ENCODE measurements at regions of chr5 and their contacts with region 1.

Region 1: DNA sequence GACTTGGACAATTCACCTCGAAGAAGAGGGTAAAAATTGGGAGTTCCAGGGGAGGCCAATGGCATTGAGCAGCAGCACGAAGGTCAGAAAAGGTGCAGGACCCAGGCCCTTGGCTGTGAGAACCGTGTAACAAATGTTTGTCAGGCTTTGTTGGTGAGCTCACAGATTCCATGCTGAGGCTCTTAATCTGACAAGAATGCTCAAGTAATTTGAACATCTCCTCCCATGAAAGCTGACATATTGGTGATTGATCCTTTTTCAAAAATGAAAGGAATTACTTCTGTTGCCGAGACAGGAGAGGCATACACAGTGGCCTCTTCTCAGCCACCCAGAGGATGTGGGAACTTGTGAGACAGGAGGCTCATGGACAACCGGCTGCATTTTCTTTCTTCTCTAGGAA is 11.6 kb downstream of the RAI14 start:
- DNase-seq: no peak
- H3K4me3 ChIP-seq: no peak overlapping the region
- H3K27ac ChIP-seq: no peak overlapping the region
- H3K4me1 ChIP-seq: peaks cover 4 to 16% (median 15%) of the 10 kb centered on the region in 4 experiments
- H3K27me3 ChIP-seq: no peaks in the 10 kb centered on the region
- CTCF ChIP-seq: no peak
- EP300 ChIP-seq: no peak
- POLR2A ChIP-seq: no peak
- RAD21 ChIP-seq: no peak

Region 2: GRCh38 chr5:34545164-34546025 is 122.3 kb before region 1 on chr5:
- CTCF ChIA-PET with region 1: no interaction called
- POLR2A ChIA-PET with region 1: no interaction called
- DNase-seq: no peak
- H3K4me3 ChIP-seq: peak overlapping the region in 1 of 4 experiments; percentile 1; a peak in 1 of 8 replicates
- H3K27ac ChIP-seq: no peak overlapping the region
- H3K4me1 ChIP-seq: peaks cover 9 to 47% (median 17%) of the 10 kb centered on the region in 4 experiments; a peak in 6 of 7 replicates
- H3K27me3 ChIP-seq: no peaks in the 10 kb centered on the region
- CTCF ChIP-seq: no peak
- EP300 ChIP-seq: no peak
- POLR2A ChIP-seq: no peak
- RAD21 ChIP-seq: no peak

Region 3: GRCh38 chr5:34555699-34556508 is 111.8 kb before region 1 on chr5:
- CTCF ChIA-PET with region 1: no interaction called
- POLR2A ChIA-PET with region 1: no interaction called
- DNase-seq: no peak
- H3K4me3 ChIP-seq: no peak overlapping the region
- H3K27ac ChIP-seq: no peak overlapping the region
- H3K4me1 ChIP-seq: no peaks in the 10 kb centered on the region
- H3K27me3 ChIP-seq: peaks cover 0 to 5% (median 0%) of the 10 kb centered on the region in 4 experiments; a peak in 1 of 7 replicates
- CTCF ChIP-seq: no peak
- EP300 ChIP-seq: no peak
- POLR2A ChIP-seq: no peak
- RAD21 ChIP-seq: no peak

Region 4: DNA sequence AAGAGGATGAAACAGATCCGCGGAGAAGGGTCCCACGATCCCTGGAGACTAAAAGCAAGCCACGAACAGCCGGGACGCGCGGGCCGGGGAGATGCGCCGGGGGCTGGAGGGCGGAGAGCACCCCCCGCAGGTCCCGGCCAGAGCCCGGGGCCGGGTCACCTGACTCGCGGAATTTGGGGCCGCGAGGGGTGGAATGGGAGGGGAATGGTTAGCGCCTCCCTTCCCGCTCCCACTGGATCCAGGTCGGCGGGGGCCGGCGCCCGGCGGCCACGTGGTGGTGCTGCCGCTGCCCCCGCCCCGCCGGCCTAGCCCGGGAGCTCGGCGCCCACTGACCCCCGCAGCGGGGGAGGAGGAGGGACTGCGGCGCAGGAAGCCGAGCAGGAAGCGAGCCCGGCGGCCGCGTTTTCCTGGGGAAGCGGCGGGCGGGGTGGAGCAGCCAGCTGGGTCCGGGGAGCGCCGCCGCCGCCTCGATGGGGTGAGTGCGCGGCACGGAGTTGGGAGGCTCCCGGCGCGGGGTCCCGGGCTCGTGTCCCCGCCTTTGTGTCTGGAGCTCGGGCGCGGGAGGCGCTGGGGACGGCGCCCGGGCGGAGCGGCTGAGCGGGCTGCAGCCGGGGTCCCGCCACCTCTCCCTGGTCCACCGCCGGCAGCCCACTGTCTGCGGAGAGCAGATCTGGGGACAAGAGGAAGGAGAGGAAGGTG is 11.6 kb before region 1 on chr5 and contains the start of gene RAI14:
- CTCF ChIA-PET with region 1: no interaction called
- POLR2A ChIA-PET with region 1: interaction called, 11 read pairs
- DNase-seq: peak; percentile 47 to 86
- H3K4me3 ChIP-seq: peak within 1 kb of the TSS; percentile 69 to 86 (median 80)
- H3K27ac ChIP-seq: peak within 1 kb of the TSS; percentile 76
- H3K4me1 ChIP-seq: peaks cover 9 to 20% (median 13%) of the 10 kb centered on the region in 4 experiments; a peak in 6 of 7 replicates
- H3K27me3 ChIP-seq: no peaks in the 10 kb centered on the region
- CTCF ChIP-seq: no peak
- EP300 ChIP-seq: 0 out of 3 replicates have a peak, but pooled peaks of 1 of the 2 experiments have one; percentile 16
- POLR2A ChIP-seq: peak in 1 of 2 experiments; percentile 38; a peak in 1 of 3 replicates
- RAD21 ChIP-seq: peak in 1 of 2 experiments; percentile 34; a peak in 2 of 4 replicates
- total RNA-seq, gene RAI14: 210 and 216 TPM in 2 replicates

Region 5: GRCh38 chr5:34686762-34687268 is 19.1 kb after region 1 on chr5:
- CTCF ChIA-PET with region 1: interaction called, 3 read pairs
- POLR2A ChIA-PET with region 1: interaction called, 11 read pairs
- DNase-seq: no peak
- H3K4me3 ChIP-seq: no peak overlapping the region
- H3K27ac ChIP-seq: no peak overlapping the region; the same call in 1 of the 2 replicates
- H3K4me1 ChIP-seq: peaks cover 4 to 24% (median 17%) of the 10 kb centered on the region in 4 experiments; a peak in 6 of 7 replicates
- H3K27me3 ChIP-seq: no peaks in the 10 kb centered on the region
- CTCF ChIP-seq: no peak
- EP300 ChIP-seq: no peak
- POLR2A ChIP-seq: no peak
- RAD21 ChIP-seq: peak in 1 of 2 experiments; percentile 14; a peak in 1 of 4 replicates